ENCODE measurements at regions of chr2 and their contacts with region 1.

Region 1: DNA sequence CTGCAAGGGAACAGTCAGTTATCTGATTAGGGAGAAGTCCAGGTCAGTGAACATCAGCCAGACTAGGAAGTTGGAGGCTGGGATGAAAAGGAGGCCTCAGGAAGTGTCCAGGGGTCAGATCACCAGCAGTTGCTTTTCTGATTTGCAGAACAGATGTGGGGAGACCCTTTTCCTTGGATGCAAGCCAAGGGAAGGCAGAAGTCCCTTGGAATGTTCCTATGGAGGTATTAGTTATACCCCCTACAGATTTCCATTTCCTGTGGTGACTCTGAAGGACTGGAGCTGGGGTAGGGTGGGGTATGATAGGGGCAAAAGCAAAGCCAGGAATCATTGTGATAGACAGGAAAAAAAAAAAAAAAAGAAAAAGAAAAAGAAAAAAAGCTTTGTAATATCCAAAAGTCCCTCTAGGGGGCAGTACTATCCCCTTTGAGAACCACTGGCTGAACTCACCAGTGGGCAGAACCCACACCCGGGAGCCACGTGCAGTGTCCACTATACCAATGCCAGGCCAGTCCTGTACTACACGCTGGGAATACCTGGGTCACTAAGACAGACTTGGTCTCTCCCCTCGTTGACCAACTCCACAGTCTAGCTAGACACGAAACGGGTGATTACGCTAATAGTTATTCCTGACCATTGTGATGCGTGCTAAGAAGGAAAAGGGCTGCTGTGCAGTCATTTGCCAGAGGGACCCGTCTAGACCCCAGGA is 7.4 kb downstream of the DYSF start:
- H3K4me3 ChIP-seq: no peak overlapping the region
- H3K27ac ChIP-seq: no peak overlapping the region
- H3K4me1 ChIP-seq: no peaks in the 10 kb centered on the region
- CTCF ChIP-seq: 0 out of 2 replicates have a peak, but pooled peaks have one; percentile 11

Region 2: GRCh38 chr2:71477231-71477691 is 16.5 kb after region 1 on chr2:
- CTCF ChIA-PET with region 1: interaction called, 22 read pairs
- POLR2A ChIA-PET with region 1: interaction called, 3 read pairs
- H3K4me3 ChIP-seq: no peak overlapping the region
- H3K27ac ChIP-seq: no peak overlapping the region
- H3K4me1 ChIP-seq: no peaks in the 10 kb centered on the region
- CTCF ChIP-seq: no peak

Region 3: DNA sequence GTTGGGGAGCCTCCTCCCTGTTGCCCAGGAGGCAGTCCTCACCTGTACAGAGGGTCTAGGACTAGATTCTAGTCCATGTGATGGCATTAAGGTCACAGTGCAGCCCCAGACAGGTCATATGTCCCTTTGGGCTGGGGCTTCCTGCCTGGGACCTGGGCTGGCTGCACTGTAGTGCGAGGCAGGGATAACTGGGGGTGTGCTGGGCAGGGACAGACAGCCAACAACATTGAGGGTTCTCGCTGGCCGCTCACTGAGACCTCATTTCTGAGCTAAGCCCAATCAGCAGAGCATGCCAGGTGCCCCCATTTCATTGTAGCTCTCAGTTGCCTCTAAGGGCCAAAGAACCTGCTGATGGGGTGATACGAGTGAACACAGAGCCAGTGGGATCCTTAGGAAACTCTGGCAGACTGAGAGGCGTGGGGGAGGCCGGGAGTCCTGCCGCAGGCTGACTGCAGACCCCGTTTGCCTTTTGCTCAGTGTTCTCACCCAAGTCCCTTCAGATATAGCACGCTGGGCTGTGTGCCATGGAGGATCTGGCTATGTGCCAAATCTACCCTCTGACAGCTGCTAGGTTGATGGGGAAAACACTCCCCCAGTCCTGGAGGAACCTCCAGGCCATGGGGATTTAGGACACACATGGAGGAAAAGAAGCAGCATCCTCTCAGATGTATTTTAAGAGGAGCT is 44.5 kb after region 1 on chr2:
- CTCF ChIA-PET with region 1: interaction called, 32 read pairs
- POLR2A ChIA-PET with region 1: no interaction called
- H3K4me3 ChIP-seq: no peak overlapping the region
- H3K27ac ChIP-seq: no peak overlapping the region
- H3K4me1 ChIP-seq: no peaks in the 10 kb centered on the region
- CTCF ChIP-seq: no peak

Region 4: GRCh38 chr2:71530641-71531332 is 70.0 kb after region 1 on chr2:
- CTCF ChIA-PET with region 1: no interaction called
- POLR2A ChIA-PET with region 1: no interaction called
- H3K4me3 ChIP-seq: no peak overlapping the region
- H3K27ac ChIP-seq: no peak overlapping the region
- H3K4me1 ChIP-seq: no peaks in the 10 kb centered on the region
- CTCF ChIP-seq: no peak; the same call in 1 of the 2 replicates

Measured in HEK293 (cell line).